ENCODE measurements at regions of chr3 and their contacts with region 1.

Region 1: GRCh38 chr3:45210308-45211041 is 15.6 kb downstream of the TMEM158 start:
- DNase-seq: peak; percentile 88
- ATAC-seq: peak; percentile 90
- H3K4me3 Mint-ChIP-seq: no peak overlapping the region
- H3K27ac Mint-ChIP-seq: no peak overlapping the region
- H3K4me1 Mint-ChIP-seq: peaks cover 7% of the 10 kb centered on the region
- H3K27me3 Mint-ChIP-seq: peaks cover 2% of the 10 kb centered on the region
- CTCF ChIP-seq: peak; percentile 39; the same call in 1 of the 2 replicates

Region 2: GRCh38 chr3:45037734-45038455 is 172.6 kb before region 1 on chr3:
- CTCF ChIA-PET with region 1: interaction called, 113 read pairs
- POLR2A ChIA-PET with region 1: interaction called, 3 read pairs
- DNase-seq: peak; percentile 94
- ATAC-seq: peak; percentile 79
- H3K4me3 Mint-ChIP-seq: peak overlapping the region; percentile 43
- H3K27ac Mint-ChIP-seq: no peak overlapping the region
- H3K4me1 Mint-ChIP-seq: peaks cover 27% of the 10 kb centered on the region
- H3K27me3 Mint-ChIP-seq: peaks cover 51% of the 10 kb centered on the region
- CTCF ChIP-seq: peak; percentile 70

Region 3: GRCh38 chr3:45055411-45056143 is 154.9 kb before region 1 on chr3:
- CTCF ChIA-PET with region 1: interaction called, 16 read pairs
- POLR2A ChIA-PET with region 1: no interaction called
- DNase-seq: peak; percentile 34
- ATAC-seq: peak; percentile 67
- H3K4me3 Mint-ChIP-seq: no peak overlapping the region
- H3K27ac Mint-ChIP-seq: no peak overlapping the region
- H3K4me1 Mint-ChIP-seq: peaks cover 19% of the 10 kb centered on the region
- H3K27me3 Mint-ChIP-seq: peaks cover 92% of the 10 kb centered on the region
- CTCF ChIP-seq: 0 out of 2 replicates have a peak, but pooled peaks have one; percentile 11

Region 4: DNA sequence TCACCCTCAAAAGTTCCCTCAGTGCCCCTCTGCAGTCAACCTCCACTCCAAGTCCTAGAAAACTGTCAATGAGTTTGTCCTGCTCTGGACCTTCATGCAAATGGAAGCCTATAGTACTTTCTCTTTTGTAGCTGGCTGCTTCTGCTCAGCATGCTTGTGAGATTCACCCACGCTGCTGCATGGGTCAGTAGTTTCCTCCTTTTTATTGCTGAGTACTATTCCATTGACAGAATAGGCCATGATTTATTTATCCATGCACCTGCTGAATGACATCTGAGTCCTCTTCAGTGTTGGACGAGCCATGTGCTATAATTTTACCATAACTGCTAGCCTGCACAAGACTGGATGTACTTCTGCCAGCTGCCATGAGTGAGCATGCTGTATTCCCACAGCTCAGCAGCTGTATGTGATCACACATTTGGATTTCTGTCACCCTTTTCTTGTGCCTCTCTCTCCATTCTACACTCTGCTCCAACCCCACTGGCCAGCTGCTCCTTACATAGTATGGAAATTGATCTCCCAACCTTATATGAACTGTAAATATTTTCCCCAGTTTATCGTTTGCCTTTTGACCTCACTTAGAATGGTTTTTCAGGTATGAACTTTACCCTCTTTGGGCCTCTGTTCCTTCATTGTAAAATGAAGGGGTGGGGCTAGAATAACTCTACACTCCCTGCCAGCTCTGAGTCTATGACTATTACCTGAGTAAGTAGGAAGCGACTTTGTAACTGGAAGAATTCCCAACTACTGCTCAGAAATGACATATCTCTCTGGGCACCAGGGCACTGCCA is 90.5 kb before region 1 on chr3:
- CTCF ChIA-PET with region 1: interaction called, 20 read pairs
- POLR2A ChIA-PET with region 1: no interaction called
- DNase-seq: no peak
- ATAC-seq: no peak
- H3K4me3 Mint-ChIP-seq: no peak overlapping the region
- H3K27ac Mint-ChIP-seq: no peak overlapping the region
- H3K4me1 Mint-ChIP-seq: 0 out of 2 replicates have a peak, but pooled peaks cover 2% of the 10 kb centered on the region
- H3K27me3 Mint-ChIP-seq: no peaks in the 10 kb centered on the region
- CTCF ChIP-seq: no peak

Region 5: DNA sequence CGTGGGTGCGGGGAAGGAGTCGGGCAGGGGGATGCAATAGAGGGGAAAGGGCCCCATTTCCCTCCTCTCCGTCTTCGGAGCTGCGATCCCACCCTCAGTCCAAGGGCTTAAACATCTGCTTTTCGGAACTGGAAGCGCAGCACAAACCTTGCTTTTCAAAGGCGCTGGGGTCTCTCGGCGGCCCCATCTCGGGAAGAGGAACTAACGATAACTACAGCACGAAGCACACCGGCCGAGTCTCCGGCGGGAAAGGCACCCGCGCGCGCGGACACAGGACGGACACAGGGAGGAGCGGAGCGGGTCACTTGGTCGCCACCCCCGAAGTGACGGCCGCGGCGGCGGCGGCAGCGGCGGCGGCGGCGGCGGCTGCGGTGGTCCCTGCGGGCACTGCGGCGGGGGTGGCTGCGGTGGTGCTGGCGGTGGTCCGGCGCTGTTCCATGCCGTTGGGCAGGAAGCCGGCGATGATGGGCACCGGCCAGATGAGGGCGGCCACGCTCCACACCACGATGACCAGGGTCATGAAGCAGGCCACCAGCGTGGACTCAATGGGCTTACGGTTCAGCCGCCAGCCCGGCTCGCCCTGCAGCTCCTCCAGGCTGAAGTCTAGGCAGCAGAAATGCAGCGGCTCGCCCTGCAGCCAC is 14.5 kb after region 1 on chr3:
- CTCF ChIA-PET with region 1: interaction called, 17 read pairs
- POLR2A ChIA-PET with region 1: no interaction called
- DNase-seq: peak; percentile 81
- ATAC-seq: peak; percentile 73
- H3K4me3 Mint-ChIP-seq: peak overlapping the region; percentile 91
- H3K27ac Mint-ChIP-seq: no peak overlapping the region
- H3K4me1 Mint-ChIP-seq: peaks cover 34% of the 10 kb centered on the region
- H3K27me3 Mint-ChIP-seq: peaks cover 33% of the 10 kb centered on the region
- CTCF ChIP-seq: peak; percentile 17; the same call in 1 of the 2 replicates

Region 6: DNA sequence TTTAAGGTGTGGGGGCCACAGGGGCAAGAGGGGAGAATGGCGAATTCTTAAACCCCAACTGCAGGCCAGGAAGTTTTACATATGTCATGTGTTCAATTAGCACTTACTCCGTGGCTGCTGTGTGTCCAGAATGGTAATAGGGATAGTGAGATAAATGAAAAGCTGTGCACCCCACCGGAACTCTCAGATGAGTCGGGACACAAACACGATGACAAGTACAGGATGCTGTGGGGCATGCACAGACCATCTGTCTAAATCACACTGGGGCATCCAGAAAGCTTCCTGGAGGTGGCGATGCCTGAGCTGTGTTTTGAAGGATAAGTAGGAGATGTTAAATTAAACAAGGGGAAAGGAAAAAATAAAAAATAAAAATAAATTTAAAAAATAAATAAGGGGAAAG is 33.9 kb after region 1 on chr3:
- CTCF ChIA-PET with region 1: no interaction called
- POLR2A ChIA-PET with region 1: no interaction called
- DNase-seq: no peak
- ATAC-seq: no peak
- H3K4me3 Mint-ChIP-seq: no peak overlapping the region
- H3K27ac Mint-ChIP-seq: no peak overlapping the region
- H3K4me1 Mint-ChIP-seq: peaks cover 17% of the 10 kb centered on the region
- H3K27me3 Mint-ChIP-seq: no peaks in the 10 kb centered on the region
- CTCF ChIP-seq: no peak